ENCODE measurements at regions of chr2 and their contacts with region 1.

Region 1: DNA sequence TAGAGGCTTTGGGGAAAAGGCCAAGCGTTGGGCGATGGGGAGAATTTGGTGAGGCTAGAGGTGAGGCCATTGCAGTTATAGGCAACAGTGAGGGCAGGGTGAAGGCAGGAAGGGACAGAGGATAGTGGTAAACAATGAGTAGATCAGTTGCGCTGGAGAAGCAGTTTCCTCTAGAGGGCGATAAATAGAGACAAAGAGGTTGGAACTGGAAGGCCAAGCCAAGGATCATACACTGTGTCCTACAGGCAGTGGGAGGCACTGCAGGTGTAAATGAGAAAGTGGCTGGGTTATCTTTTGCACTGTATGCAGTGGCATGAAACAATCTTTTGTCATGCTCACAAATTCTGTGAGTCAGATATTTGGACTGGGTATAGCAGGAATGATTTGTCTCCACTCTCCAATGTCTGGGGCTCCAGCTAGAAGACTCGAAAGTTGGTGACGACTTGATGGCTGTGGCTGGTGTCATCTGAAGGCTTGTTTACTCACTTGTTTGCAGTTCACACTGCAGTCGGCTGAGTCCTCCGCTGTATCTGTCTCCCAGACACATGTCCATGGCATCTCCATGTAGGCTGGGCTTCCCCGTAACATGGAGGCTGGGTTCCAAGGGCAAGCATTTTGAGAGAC is 82.1 kb downstream of the TNP1 start:
- DNase-seq: no peak
- ATAC-seq: no peak

Region 2: DNA sequence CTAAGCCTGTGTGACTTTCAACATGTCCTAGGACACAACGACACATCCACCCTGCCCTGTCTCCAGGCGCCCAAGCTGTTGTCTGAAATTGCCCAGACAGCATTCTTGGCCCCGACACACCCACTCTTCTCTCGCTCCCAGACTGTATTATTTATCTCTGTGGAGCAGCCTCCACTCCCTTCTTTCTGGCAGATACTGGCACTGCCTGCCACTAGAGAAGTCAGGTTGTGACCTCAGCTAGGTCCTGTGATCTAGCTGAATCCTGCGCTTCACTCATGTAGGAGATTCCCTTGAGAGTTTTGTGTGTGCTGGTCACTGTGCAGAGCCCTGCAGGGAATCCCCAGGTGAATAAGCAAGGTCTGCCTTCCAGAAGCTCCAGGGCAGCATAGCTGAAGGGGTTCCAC is 159.2 kb after region 1 on chr2:
- intact Hi-C with region 1: loop called (anchors 10 kb)
- DNase-seq: no peak
- ATAC-seq: peak; percentile 87